Activated CD4-positive, alpha-beta T cell treated with anti-CD3 and anti-CD28 coated beads, Interleukin-2, amount 10 ng/mL, durations not matched to agents 24 days and 14 days (primary cell): ENCODE measurements at regions of chr7 and their contacts with region 1.

Region 1: DNA sequence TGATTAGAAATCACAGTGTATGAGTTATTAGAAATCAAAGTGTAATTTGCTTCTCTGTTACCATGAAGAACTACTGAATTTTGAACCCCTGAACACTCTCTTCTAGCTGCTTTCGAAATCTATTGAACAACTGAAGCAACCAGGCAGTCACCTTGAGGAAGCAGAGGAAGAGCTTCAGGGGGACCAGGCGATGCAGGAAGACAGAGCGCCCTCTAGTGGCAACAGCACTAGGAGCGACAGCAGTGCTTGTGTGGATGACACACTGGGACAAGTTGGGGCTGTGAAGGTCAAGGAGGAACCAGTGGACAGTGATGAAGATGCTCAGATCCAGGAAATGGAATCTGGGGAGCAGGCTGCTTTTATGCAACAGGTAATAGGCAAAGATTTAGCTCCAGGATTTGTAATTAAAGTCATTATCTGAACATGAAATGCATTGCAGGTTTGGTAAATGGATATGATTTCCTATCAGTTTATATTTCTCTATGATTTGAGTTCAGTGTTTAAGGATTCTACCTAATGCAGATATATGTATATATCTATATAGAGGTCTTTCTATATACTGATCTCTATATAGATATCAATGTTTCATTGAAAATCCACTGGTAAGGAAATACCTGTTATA is 170.7 kb downstream of the HDAC9 start:
- DNase-seq: peak; percentile 88
- H3K4me3 Mint-ChIP-seq: no peak overlapping the region
- H3K27ac Mint-ChIP-seq: no peak overlapping the region
- H3K4me1 Mint-ChIP-seq: peaks cover 3% of the 10 kb centered on the region
- H3K27me3 Mint-ChIP-seq: peaks cover under 1% of the 10 kb centered on the region

Region 2: GRCh38 chr7:17680943-17681351 is 985.3 kb before region 1 on chr7:
- intact Hi-C with region 1: loop called (anchors 10 kb)
- DNase-seq: no peak
- H3K4me3 Mint-ChIP-seq: no peak overlapping the region
- H3K27ac Mint-ChIP-seq: no peak overlapping the region
- H3K4me1 Mint-ChIP-seq: no peaks in the 10 kb centered on the region
- H3K27me3 Mint-ChIP-seq: peaks cover 8% of the 10 kb centered on the region

Region 3: GRCh38 chr7:18352339-18353255 is 313.6 kb before region 1 on chr7:
- intact Hi-C with region 1: loop called (anchors 2 kb)
- DNase-seq: peak; percentile 59
- H3K4me3 Mint-ChIP-seq: no peak overlapping the region
- H3K27ac Mint-ChIP-seq: no peak overlapping the region
- H3K4me1 Mint-ChIP-seq: peaks cover 3% of the 10 kb centered on the region
- H3K27me3 Mint-ChIP-seq: peaks cover 6% of the 10 kb centered on the region

Region 4: DNA sequence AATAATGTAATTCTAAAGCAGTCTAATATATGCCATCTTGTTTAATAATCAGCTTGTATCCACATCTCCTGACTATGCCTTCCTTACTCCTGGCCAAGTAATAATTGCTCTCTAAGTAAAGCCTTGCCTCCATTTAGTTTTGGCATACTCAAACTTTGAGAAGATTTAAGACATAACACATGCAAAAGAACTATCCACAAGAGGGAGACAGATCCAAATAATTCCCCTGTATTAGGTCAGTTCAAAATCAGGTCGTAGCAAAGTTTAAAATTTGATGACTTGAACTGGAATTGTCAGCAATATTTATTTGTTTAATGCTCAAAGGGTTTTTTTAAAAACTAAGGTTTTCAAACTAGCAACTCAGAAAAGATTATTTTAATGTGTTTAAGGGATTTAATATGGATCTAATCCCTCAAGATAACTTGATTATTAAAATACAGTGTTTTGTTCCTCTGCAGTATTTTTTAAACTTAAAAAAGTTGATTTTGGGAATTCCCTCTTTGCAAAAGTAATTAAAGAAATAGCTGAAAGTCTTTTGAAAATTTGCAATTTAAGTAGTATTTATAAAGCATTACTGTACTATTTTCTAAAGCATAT is 75.4 kb before region 1 on chr7:
- intact Hi-C with region 1: loop called (anchors 1 kb)
- DNase-seq: no peak
- H3K4me3 Mint-ChIP-seq: no peak overlapping the region
- H3K27ac Mint-ChIP-seq: no peak overlapping the region
- H3K4me1 Mint-ChIP-seq: no peaks in the 10 kb centered on the region
- H3K27me3 Mint-ChIP-seq: peaks cover 2% of the 10 kb centered on the region

Region 5: GRCh38 chr7:18648849-18649758 is 17.1 kb before region 1 on chr7:
- intact Hi-C with region 1: no loop called
- DNase-seq: peak; percentile 57
- H3K4me3 Mint-ChIP-seq: no peak overlapping the region
- H3K27ac Mint-ChIP-seq: peak overlapping the region; percentile 22
- H3K4me1 Mint-ChIP-seq: no peaks in the 10 kb centered on the region
- H3K27me3 Mint-ChIP-seq: no peaks in the 10 kb centered on the region